Naive thymus-derived CD4-positive, alpha-beta T cell (primary cell): ENCODE measurements at regions of chr20 and their contacts with region 1.

Region 1: GRCh38 chr20:4813863-4814695 is 92.4 kb downstream of the PRND start:
- DNase-seq: peak; percentile 40 to 91 (median 88)
- ATAC-seq: peak; percentile 80
- H3K4me3 ChIP-seq: peak overlapping the region; percentile 86
- H3K4me3 Mint-ChIP-seq: peak overlapping the region; percentile 78 to 99 (median 92)
- H3K27ac ChIP-seq: peak overlapping the region; percentile 98
- H3K27ac Mint-ChIP-seq: peak overlapping the region; percentile 97 to 100 (median 99)
- H3K4me1 ChIP-seq: peaks cover 68 to 69% of the 10 kb centered on the region in 2 donors
- H3K4me1 Mint-ChIP-seq: peaks cover 56 to 92% (median 88%) of the 10 kb centered on the region in 7 donors
- H3K27me3 ChIP-seq: no peaks in the 10 kb centered on the region
- H3K27me3 Mint-ChIP-seq: no peaks in the 10 kb centered on the region

Region 2: DNA sequence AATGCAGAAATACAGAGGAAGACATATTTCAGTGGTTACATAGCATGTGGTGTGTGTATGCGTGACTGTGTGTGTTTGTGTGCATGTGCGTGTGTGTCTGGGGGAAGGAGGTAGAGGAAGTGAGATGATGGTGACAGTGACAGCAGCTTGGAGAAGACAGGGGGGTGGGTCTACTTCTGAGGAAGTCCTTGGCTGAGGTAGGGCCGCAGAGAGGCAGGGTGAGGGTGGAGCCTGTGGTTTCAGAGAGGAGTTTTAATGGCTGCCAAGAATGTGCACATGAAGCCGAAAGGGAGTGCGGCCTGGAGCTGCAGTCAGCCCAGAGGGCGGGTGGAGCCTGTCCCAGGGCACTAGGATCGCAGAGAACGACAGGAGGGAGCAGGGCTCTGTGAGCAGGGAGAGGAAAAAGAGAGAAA is 776.0 kb before region 1 on chr20:
- CTCF ChIA-PET with region 1: no interaction called
- POLR2A ChIA-PET with region 1: no interaction called
- intact Hi-C with region 1: loop called in 1 of 2 experiments (anchors 10 kb)
- DNase-seq: peak; percentile 51 to 93 (median 89)
- ATAC-seq: peak; percentile 100
- H3K4me3 ChIP-seq: peak overlapping the region; percentile 34
- H3K4me3 Mint-ChIP-seq: peak overlapping the region; percentile 72 to 92 (median 84)
- H3K27ac ChIP-seq: peak overlapping the region; percentile 57
- H3K27ac Mint-ChIP-seq: peak overlapping the region; percentile 92 to 99 (median 95)
- H3K4me1 ChIP-seq: peaks cover 16 to 18% of the 10 kb centered on the region in 2 donors
- H3K4me1 Mint-ChIP-seq: peaks cover 10 to 27% (median 19%) of the 10 kb centered on the region in 7 donors
- H3K27me3 ChIP-seq: no peaks in the 10 kb centered on the region
- H3K27me3 Mint-ChIP-seq: no peaks in the 10 kb centered on the region

Region 3: DNA sequence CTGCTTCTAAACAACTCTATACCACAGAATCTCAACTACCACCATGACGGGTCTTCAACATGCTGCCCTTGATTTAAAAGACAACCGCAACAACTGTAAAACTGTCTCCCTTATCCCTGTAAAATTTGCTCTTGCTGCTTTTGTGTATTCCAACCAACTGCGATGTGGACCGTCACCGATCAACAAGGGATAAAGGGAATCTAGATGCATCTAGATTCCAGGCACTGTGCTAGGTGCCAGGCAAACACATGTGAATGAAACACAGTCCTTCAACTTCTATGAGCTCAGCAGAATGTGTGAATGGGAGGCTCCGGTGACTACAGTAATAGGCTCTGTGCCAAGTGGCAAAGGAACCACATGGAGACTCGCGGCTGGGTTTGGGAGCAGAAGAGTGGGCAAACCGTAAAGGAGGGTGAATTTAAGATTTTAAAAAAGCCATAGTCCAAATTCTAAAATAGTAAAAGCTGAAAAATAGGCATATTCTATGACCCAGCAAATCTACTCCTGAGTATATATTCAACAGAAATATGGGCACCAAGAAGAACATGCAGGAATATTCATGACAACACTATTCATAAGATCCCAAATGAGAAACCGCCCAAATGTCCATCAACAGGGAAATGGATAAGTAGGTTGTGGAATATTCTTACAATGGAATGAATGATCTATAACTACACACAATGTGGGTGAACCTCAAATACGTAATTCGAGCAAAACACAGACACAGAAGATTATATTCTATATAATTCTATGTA is 96.1 kb before region 1 on chr20:
- CTCF ChIA-PET with region 1: no interaction called
- POLR2A ChIA-PET with region 1: no interaction called
- intact Hi-C with region 1: no loop called
- DNase-seq: no peak
- ATAC-seq: no peak
- H3K4me3 ChIP-seq: no peak overlapping the region
- H3K4me3 Mint-ChIP-seq: no peak overlapping the region
- H3K27ac ChIP-seq: no peak overlapping the region
- H3K27ac Mint-ChIP-seq: peak overlapping the region in 1 of 9 donors; percentile 57
- H3K4me1 ChIP-seq: peaks cover 0 to 7% of the 10 kb centered on the region in 2 donors
- H3K4me1 Mint-ChIP-seq: peaks cover 0 to 16% (median 12%) of the 10 kb centered on the region in 7 donors
- H3K27me3 ChIP-seq: no peaks in the 10 kb centered on the region
- H3K27me3 Mint-ChIP-seq: peaks cover 0 to 27% (median 5%) of the 10 kb centered on the region in 5 donors

Region 4: DNA sequence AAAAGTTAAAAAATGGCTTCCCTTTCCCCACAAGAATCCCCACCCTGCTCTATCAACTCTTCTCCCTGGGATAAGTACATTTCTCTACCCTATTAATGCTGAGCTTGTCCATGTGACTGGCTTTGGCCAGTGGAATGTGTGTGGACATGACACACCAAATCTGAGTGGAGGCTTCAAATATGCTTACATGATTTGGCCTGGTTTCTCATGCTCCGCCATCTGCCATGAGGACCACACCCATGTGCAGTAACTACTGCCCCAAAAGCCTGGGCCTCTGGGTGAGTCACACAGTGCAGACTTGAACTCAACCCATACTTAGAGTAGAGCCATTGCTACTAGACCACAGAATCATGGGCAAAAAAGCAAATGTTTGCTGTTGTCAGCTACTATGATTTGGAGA is 27.0 kb before region 1 on chr20:
- CTCF ChIA-PET with region 1: interaction called, 4 read pairs
- POLR2A ChIA-PET with region 1: interaction called, 5 read pairs
- intact Hi-C with region 1: loop called in 1 of 2 experiments (anchors 2 kb)
- DNase-seq: no peak
- ATAC-seq: peak; percentile 80
- H3K4me3 ChIP-seq: no peak overlapping the region
- H3K4me3 Mint-ChIP-seq: no peak overlapping the region
- H3K27ac ChIP-seq: no peak overlapping the region
- H3K27ac Mint-ChIP-seq: peak overlapping the region in 8 of 9 donors; percentile 20 to 93 (median 48)
- H3K4me1 ChIP-seq: no peaks in the 10 kb centered on the region
- H3K4me1 Mint-ChIP-seq: peaks cover 0 to 30% (median under 1%) of the 10 kb centered on the region in 7 donors
- H3K27me3 ChIP-seq: no peaks in the 10 kb centered on the region
- H3K27me3 Mint-ChIP-seq: no peaks in the 10 kb centered on the region

Region 5: DNA sequence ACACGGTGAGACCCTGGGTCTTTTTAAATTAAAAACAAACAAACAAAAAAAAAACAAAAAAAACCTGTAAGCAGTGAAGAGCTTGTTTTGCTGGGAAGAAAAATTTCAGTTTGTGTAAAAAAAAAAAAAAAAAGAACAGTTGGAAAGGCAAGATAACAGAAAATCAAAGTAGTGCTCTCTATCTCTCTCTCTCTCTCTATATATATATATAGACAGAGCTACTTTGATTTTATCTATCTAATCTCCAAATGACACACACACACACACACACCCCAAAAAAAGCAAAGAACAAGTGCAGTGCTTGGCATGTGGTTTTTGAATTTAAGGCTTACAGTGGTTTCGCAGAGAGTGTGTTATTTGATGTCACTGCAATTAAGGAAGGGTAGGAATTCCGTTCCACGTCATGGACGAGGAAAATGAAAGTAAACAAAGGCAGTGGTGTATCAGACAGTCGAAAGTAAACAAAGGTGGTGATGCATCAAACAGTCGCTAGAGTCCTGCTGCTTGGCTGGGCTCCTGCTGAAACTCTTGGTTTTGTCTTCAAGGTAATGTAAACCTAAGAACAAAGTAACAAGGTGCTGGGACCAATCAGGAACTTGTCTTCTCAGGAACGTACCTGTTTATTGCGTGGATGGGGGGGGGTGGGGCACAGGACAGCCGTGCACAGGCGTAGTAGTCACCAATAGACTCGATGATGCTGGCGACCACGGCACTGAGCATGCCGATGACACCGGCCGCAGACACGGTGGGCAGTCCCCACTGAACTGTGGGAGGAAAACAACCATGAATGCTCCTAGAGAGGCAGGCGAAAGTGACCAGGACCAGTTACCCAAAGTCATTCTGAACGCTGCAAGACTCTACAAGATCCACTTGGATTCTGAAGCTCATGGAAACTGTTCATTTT is 55.5 kb after region 1 on chr20:
- CTCF ChIA-PET with region 1: interaction called, 3 read pairs
- POLR2A ChIA-PET with region 1: interaction called, 4 read pairs
- intact Hi-C with region 1: loop called in 1 of 2 experiments (anchors 5 kb)
- DNase-seq: peak in 7 of 9 donors; percentile 3 to 51 (median 27)
- ATAC-seq: peak; percentile 71
- H3K4me3 ChIP-seq: no peak overlapping the region
- H3K4me3 Mint-ChIP-seq: peak overlapping the region in 7 of 10 donors; percentile 10 to 65 (median 39)
- H3K27ac ChIP-seq: no peak overlapping the region
- H3K27ac Mint-ChIP-seq: peak overlapping the region in 8 of 9 donors; percentile 21 to 88 (median 76)
- H3K4me1 ChIP-seq: no peaks in the 10 kb centered on the region
- H3K4me1 Mint-ChIP-seq: peaks cover 0 to 31% (median 21%) of the 10 kb centered on the region in 7 donors
- H3K27me3 ChIP-seq: no peaks in the 10 kb centered on the region
- H3K27me3 Mint-ChIP-seq: no peaks in the 10 kb centered on the region

Region 6: GRCh38 chr20:5001174-5002076 is 187.3 kb after region 1 on chr20 and contains the start of gene SLC23A2:
- CTCF ChIA-PET with region 1: no interaction called
- POLR2A ChIA-PET with region 1: no interaction called
- intact Hi-C with region 1: loop called in 1 of 2 experiments (anchors 5 kb)
- DNase-seq: peak; percentile 39 to 72 (median 55)
- ATAC-seq: peak; percentile 93
- H3K4me3 ChIP-seq: peak within 1 kb of the TSS; percentile 93
- H3K4me3 Mint-ChIP-seq: peak within 1 kb of the TSS; percentile 89 to 99 (median 92)
- H3K27ac ChIP-seq: peak within 1 kb of the TSS; percentile 75
- H3K27ac Mint-ChIP-seq: peak within 1 kb of the TSS; percentile 84 to 97 (median 87)
- H3K4me1 ChIP-seq: peaks cover 14 to 17% of the 10 kb centered on the region in 2 donors
- H3K4me1 Mint-ChIP-seq: peaks cover 33 to 48% (median 36%) of the 10 kb centered on the region in 7 donors
- H3K27me3 ChIP-seq: no peaks in the 10 kb centered on the region
- H3K27me3 Mint-ChIP-seq: peaks cover 0 to 15% (median 0%) of the 10 kb centered on the region in 5 donors
- total RNA-seq, gene SLC23A2: 19.2 to 32.4 (median 29.6) TPM

Region 7: DNA sequence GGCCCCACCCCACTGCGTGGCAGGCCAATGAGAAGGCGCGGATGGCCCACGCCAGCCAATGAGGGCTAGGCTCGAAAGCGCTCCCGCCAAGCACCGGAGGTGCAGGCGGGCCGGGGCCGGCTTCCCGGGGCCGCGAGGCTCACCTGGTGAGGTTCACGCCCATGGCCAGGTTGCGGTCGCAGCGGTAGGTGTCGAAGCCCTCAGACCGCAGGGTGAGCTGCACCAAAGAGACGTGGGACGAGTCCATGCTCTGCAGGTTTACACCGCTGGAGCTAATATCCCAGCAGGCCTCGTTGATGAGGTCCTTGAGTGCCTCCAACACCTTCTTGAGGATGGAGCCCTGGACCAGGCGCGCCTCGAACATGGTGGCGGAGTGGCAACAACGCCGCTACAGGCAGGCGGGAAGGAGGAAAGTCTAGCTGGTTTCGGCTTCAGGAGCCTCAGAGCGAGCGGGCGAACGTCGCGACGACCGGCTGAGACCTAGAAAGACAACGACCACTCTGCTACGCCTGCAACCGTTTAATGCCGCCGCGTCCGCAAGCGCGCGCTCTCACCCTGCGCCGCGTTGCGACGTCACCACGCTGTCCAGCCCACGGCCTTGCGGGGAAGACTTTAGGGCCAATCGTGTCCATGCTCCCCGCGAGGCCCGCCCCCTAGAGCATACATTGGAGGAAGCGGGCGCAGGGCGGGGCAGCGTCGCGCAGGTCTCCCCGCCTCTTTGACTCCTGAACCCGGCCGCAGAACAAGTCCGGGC is 305.5 kb after region 1 on chr20 and contains the start of gene PCNA:
- CTCF ChIA-PET with region 1: interaction called, 5 read pairs
- POLR2A ChIA-PET with region 1: interaction called, 8 read pairs
- intact Hi-C with region 1: loop called in 1 of 2 experiments (anchors 1 kb)
- DNase-seq: peak; percentile 85 to 96 (median 94)
- ATAC-seq: peak; percentile 97
- H3K4me3 ChIP-seq: peak within 1 kb of the TSS; percentile 98
- H3K4me3 Mint-ChIP-seq: peak within 1 kb of the TSS; percentile 87 to 99 (median 96)
- H3K27ac ChIP-seq: peak within 1 kb of the TSS; percentile 73
- H3K27ac Mint-ChIP-seq: peak within 1 kb of the TSS; percentile 82 to 99 (median 96)
- H3K4me1 ChIP-seq: peaks cover 9 to 22% of the 10 kb centered on the region in 2 donors
- H3K4me1 Mint-ChIP-seq: peaks cover 19 to 66% (median 32%) of the 10 kb centered on the region in 7 donors
- H3K27me3 ChIP-seq: no peaks in the 10 kb centered on the region
- H3K27me3 Mint-ChIP-seq: peaks cover 0 to 2% (median 0%) of the 10 kb centered on the region in 5 donors
- total RNA-seq, gene PCNA: 21.6 to 392 (median 39.3) TPM

Region 8: GRCh38 chr20:5608442-5609161 is 794.5 kb after region 1 on chr20:
- CTCF ChIA-PET with region 1: no interaction called
- POLR2A ChIA-PET with region 1: no interaction called
- intact Hi-C with region 1: loop called in 1 of 2 experiments (anchors 10 kb)
- DNase-seq: peak in 1 of 9 donors; percentile 17
- ATAC-seq: no peak
- H3K4me3 ChIP-seq: peak overlapping the region; percentile 86
- H3K4me3 Mint-ChIP-seq: peak overlapping the region; percentile 90 to 99 (median 97)
- H3K27ac ChIP-seq: peak overlapping the region; percentile 99
- H3K27ac Mint-ChIP-seq: peak overlapping the region; percentile 96 to 100 (median 99)
- H3K4me1 ChIP-seq: peaks cover 35 to 41% of the 10 kb centered on the region in 2 donors
- H3K4me1 Mint-ChIP-seq: peaks cover 32 to 66% (median 56%) of the 10 kb centered on the region in 7 donors
- H3K27me3 ChIP-seq: no peaks in the 10 kb centered on the region
- H3K27me3 Mint-ChIP-seq: no peaks in the 10 kb centered on the region